Activated B cell treated with CpG ODN at 0.5 μM for 24 hours (primary cell): ENCODE measurements at regions of chr11 and their contacts with region 1.

Region 1: GRCh38 chr11:128157423-128158298 is 429.7 kb downstream of the ETS1 start:
- DNase-seq: no peak
- ATAC-seq: peak; percentile 92
- H3K4me3 Mint-ChIP-seq: peak overlapping the region; percentile 82
- H3K27ac Mint-ChIP-seq: peak overlapping the region; percentile 50
- H3K4me1 Mint-ChIP-seq: no peaks in the 10 kb centered on the region
- H3K27me3 Mint-ChIP-seq: peaks cover 19% of the 10 kb centered on the region
- CTCF ChIP-seq: no peak

Region 2: DNA sequence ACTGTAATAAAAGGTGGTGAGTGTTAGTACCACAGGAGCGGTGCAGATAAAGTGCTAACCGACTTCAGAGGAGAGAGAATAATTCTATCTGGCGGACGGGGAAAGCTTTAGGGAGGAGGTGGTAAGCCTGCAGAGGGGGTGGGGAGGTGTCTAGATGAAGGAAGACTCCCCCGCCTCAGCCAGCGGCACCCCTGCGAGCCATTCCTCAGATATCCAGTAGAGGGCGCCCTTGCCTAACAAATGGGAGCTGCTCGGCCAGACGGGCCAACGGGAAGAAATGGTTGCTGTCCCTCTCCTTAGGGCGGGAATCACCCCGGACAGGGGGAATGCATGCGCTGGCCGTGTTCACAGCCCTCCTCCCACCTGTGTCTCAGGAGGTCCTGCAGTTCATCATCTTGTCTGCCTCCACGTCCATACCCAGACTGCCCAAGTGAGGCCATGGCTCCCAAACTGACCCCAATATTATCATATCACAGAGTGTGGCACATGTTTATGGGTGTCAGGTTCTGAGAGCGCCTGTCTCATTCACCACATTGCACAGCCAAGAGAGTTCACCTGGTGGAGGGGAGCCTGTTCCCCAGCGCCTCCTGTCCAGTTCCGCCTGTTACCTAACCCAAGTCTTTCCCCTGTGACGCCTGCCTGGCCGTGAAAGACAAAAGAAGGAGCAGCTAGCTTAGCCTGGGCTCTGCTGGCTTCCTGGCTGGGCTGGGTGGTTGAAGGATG is 1716.7 kb before region 1 on chr11:
- CTCF ChIA-PET with region 1: interaction called, 10 read pairs
- POLR2A ChIA-PET with region 1: no interaction called
- intact Hi-C with region 1: no loop called
- DNase-seq: peak; percentile 65
- ATAC-seq: peak; percentile 57
- H3K4me3 Mint-ChIP-seq: no peak overlapping the region
- H3K27ac Mint-ChIP-seq: no peak overlapping the region
- H3K4me1 Mint-ChIP-seq: peaks cover 4% of the 10 kb centered on the region
- H3K27me3 Mint-ChIP-seq: peaks cover 9% of the 10 kb centered on the region
- CTCF ChIP-seq: peak; percentile 70

Region 3: DNA sequence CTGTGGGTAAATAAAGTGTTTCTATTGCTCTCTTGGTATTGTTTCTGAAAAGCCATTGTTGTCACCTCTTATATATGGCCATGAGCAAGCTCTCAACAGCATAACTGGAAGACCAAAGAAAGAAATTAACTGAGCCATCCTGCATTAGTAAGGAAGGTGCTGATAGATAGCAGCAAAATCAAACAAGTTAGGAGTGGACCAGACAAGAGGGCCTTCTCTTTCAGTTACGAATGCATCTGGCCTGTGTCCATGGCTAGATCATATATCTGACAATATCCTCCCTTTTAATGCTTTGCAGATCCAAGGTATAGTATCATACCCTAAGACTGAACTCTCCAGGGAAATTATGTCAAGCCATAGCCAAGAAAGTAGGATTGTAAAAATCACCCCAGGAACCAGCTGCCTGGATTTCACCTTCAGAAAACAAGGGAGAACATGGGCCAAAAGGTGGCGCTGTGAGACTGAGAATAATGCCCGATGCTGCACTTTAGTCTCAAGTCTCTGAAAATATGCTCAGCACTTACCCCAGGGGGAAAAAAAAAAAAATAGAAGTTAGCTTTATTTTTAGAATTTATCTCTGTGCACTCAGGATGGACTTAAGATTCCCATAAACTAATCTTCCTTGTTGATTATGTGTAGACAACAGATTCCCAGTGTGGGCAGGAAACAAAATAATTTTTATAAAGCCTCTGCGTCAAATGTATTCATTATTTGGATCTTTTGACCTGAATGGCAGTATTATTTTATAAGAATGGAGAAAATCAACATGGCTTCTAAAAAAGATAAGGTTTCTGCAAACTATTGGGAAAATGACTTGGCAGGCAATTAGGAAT is 14.6 kb after region 1 on chr11:
- CTCF ChIA-PET with region 1: interaction called, 28 read pairs
- POLR2A ChIA-PET with region 1: no interaction called
- intact Hi-C with region 1: no loop called
- DNase-seq: peak; percentile 65
- ATAC-seq: peak; percentile 79
- H3K4me3 Mint-ChIP-seq: no peak overlapping the region
- H3K27ac Mint-ChIP-seq: no peak overlapping the region
- H3K4me1 Mint-ChIP-seq: peaks cover 5% of the 10 kb centered on the region
- H3K27me3 Mint-ChIP-seq: no peaks in the 10 kb centered on the region
- CTCF ChIP-seq: no peak

Region 4: GRCh38 chr11:128859563-128860441 is 702.1 kb after region 1 on chr11:
- CTCF ChIA-PET with region 1: interaction called, 20 read pairs
- POLR2A ChIA-PET with region 1: interaction called, 3 read pairs
- intact Hi-C with region 1: loop called (anchors 1 kb)
- DNase-seq: peak; percentile 77
- ATAC-seq: peak; percentile 98
- H3K4me3 Mint-ChIP-seq: no peak overlapping the region
- H3K27ac Mint-ChIP-seq: no peak overlapping the region
- H3K4me1 Mint-ChIP-seq: peaks cover 16% of the 10 kb centered on the region
- H3K27me3 Mint-ChIP-seq: no peaks in the 10 kb centered on the region
- CTCF ChIP-seq: peak; percentile 54

Region 5: DNA sequence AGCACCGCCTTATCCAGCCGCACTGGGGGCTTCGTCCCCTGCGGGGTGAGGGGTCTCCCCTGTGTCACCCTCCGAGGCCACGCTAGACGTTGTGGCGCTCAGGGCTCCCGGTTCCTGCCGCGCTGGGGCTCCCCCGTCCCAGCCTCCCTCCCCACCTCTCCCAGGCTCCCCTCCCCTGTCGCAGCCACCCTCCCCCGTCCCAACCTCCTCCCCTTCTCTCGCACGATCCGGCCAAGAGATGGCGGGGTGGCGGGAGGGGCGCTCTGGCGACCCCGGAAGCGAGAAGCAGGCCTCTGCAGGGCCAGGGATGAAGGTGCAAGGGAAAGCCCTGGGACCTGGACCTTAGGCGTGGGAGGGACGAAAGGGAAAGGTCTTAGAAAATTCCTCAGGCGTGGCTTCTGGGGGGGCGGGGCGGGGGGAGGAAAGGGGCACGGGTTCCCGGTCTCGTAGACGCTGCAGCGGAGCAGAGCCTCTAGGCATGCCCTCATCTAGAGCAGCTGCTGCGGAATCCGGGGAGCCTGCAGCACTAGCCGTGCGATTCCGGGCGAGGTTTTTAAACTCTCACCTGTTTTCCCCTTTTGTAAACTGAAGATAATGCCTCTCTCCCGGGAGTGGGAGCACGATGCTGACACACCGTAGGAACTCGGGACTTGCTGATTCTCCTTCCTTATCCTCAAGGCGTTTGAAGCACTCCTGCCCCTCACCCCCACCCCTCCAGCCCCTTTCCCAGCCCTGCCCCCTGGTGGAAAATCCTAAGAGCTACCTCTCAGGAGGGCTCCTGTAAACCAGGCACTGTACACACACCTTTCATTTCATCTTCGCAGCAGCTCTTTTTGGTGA is 747.9 kb after region 1 on chr11:
- CTCF ChIA-PET with region 1: interaction called, 4 read pairs
- POLR2A ChIA-PET with region 1: no interaction called
- intact Hi-C with region 1: loop called (anchors 1 kb)
- DNase-seq: peak; percentile 48
- ATAC-seq: peak; percentile 56
- H3K4me3 Mint-ChIP-seq: peak overlapping the region; percentile 79
- H3K27ac Mint-ChIP-seq: no peak overlapping the region
- H3K4me1 Mint-ChIP-seq: peaks cover 26% of the 10 kb centered on the region
- H3K27me3 Mint-ChIP-seq: peaks cover 48% of the 10 kb centered on the region
- CTCF ChIP-seq: no peak

Region 6: GRCh38 chr11:129750349-129751292 is 1593.0 kb after region 1 on chr11:
- CTCF ChIA-PET with region 1: no interaction called
- POLR2A ChIA-PET with region 1: no interaction called
- intact Hi-C with region 1: loop called (anchors 5 kb)
- DNase-seq: peak; percentile 69
- ATAC-seq: peak; percentile 81
- H3K4me3 Mint-ChIP-seq: no peak overlapping the region
- H3K27ac Mint-ChIP-seq: no peak overlapping the region
- H3K4me1 Mint-ChIP-seq: peaks cover 4% of the 10 kb centered on the region
- H3K27me3 Mint-ChIP-seq: peaks cover 27% of the 10 kb centered on the region
- CTCF ChIP-seq: peak; percentile 99